ENCODE measurements at regions of chr15 and their contacts with region 1.

Region 1: DNA sequence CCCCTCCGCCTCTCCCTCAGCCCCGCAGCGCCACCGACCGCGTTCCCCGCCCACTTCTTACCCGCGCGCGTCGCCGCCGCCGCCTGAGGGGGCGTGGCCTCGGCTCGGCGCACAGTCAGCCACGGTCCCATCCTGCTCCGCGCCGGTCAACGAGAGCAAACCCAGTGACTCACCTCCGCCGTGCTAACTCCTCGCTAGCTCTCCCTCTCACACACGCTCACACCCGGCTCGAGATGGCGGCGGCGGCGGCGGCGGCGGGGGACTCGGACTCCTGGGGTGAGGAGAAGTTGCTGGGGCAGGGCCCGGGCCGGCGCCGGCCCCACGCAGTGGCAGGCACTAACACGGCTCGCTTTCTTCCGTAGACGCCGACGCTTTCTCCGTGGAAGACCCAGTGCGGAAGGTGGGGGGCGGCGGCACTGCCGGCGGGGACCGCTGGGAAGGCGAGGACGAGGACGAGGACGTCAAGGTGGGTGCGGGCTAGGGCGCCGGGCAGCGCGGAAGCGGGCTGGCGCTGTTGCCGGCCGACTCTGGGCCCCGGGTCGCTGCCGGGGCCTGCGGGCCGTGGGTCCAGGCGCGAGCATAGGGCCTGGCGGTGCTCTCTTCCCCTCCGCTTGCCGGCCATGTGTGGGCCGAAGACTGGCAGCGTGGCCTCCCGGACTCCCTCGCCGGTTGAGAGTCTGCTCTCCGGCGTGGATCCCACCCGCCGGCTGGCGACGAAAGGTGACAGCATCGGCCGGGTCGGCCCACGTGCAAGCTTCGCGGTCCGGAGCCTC is at the start of gene EIF3J:
- DNase-seq: peak; percentile 92 to 96 (median 95)
- ATAC-seq: peak; percentile 95
- H3K4me3 ChIP-seq: peak within 1 kb of the TSS; percentile 96
- H3K4me3 Mint-ChIP-seq: peak within 1 kb of the TSS; percentile 83 to 98 (median 94)
- H3K27ac ChIP-seq: peak within 1 kb of the TSS; percentile 97
- H3K27ac Mint-ChIP-seq: peak within 1 kb of the TSS; percentile 87 to 98 (median 95)
- H3K4me1 ChIP-seq: peaks cover 27 to 29% of the 10 kb centered on the region in 2 donors
- H3K4me1 Mint-ChIP-seq: peaks cover 35 to 60% (median 51%) of the 10 kb centered on the region in 7 donors
- H3K27me3 ChIP-seq: no peaks in the 10 kb centered on the region
- H3K27me3 Mint-ChIP-seq: no peaks in the 10 kb centered on the region
- total RNA-seq, gene EIF3J: 52.9 to 83.4 (median 66.5) TPM

Region 2: DNA sequence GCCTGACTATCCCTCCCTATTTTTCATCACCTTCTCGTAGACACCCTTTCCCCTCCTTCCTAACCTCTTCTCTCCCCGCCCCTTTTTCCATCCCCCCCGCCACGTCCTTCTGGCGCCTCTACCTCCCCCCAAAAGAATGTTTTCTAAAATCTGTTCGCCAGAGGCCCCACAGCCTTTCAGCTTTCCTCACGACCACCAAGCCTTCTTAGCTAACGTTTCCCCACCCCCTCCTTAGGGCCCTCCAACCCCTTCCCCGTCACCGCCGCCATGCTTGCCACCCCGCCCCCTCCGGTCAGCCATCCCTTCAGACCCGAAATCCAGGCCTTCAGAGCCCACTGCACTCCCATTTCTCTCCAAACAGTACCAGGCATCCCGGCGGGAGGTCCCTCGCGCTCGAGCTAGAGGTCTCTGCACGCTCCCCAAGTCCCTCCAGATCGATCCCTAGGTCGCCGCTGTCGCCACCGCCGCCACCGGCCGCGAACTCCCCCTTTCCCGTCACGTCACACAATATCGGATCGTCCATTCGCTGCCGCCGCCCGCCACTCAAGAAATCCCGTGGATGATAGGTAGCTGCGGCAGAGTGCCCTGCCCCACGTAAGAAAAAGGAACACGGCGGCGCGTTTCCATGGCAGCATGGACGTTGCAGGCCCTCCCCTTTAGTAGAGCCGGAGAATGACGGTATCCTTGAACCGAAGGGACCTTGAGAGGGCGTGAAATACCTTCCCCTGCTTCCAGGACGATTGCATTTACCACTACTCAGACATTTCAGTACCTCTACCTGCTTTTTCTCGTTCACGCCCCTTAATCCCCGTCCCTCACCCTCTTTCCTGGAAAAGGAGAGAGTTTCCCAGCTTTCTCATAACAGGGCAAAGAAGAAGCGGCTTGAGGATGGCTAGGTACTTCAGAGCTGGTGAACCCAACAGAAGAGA is 1044.2 kb before region 1 on chr15 and contains the start of gene TP53BP1:
- CTCF ChIA-PET with region 1: no interaction called
- POLR2A ChIA-PET with region 1: no interaction called
- intact Hi-C with region 1: loop called in 1 of 2 experiments (anchors 5 kb)
- DNase-seq: peak; percentile 82 to 97 (median 91)
- ATAC-seq: peak; percentile 99
- H3K4me3 ChIP-seq: peak within 1 kb of the TSS; percentile 89
- H3K4me3 Mint-ChIP-seq: peak within 1 kb of the TSS; percentile 87 to 99 (median 96)
- H3K27ac ChIP-seq: peak within 1 kb of the TSS; percentile 93
- H3K27ac Mint-ChIP-seq: peak within 1 kb of the TSS; percentile 83 to 99 (median 96)
- H3K4me1 ChIP-seq: peaks cover 11 to 13% of the 10 kb centered on the region in 2 donors
- H3K4me1 Mint-ChIP-seq: peaks cover 23 to 44% (median 33%) of the 10 kb centered on the region in 7 donors
- H3K27me3 ChIP-seq: no peaks in the 10 kb centered on the region
- H3K27me3 Mint-ChIP-seq: no peaks in the 10 kb centered on the region
- total RNA-seq, gene TP53BP1: 34.5 to 41.6 (median 40.6) TPM

Region 3: GRCh38 chr15:43824302-43825246 is 712.6 kb before region 1 on chr15 and contains the start of gene MFAP1:
- CTCF ChIA-PET with region 1: no interaction called
- POLR2A ChIA-PET with region 1: no interaction called
- intact Hi-C with region 1: loop called in 1 of 2 experiments (anchors 2 kb)
- DNase-seq: peak; percentile 63 to 94 (median 89)
- ATAC-seq: peak; percentile 94
- H3K4me3 ChIP-seq: peak within 1 kb of the TSS; percentile 100
- H3K4me3 Mint-ChIP-seq: peak within 1 kb of the TSS; percentile 94 to 100 (median 98)
- H3K27ac ChIP-seq: peak within 1 kb of the TSS; percentile 97
- H3K27ac Mint-ChIP-seq: peak within 1 kb of the TSS; percentile 95 to 99 (median 98)
- H3K4me1 ChIP-seq: peaks cover 32 to 34% of the 10 kb centered on the region in 2 donors
- H3K4me1 Mint-ChIP-seq: peaks cover 37 to 81% (median 53%) of the 10 kb centered on the region in 7 donors
- H3K27me3 ChIP-seq: no peaks in the 10 kb centered on the region
- H3K27me3 Mint-ChIP-seq: no peaks in the 10 kb centered on the region
- total RNA-seq, gene MFAP1: 8.5 to 37.3 (median 21.8) TPM

Region 4: GRCh38 chr15:44231842-44232241 is 305.3 kb before region 1 on chr15:
- CTCF ChIA-PET with region 1: no interaction called
- POLR2A ChIA-PET with region 1: no interaction called
- intact Hi-C with region 1: no loop called
- DNase-seq: no peak
- ATAC-seq: no peak
- H3K4me3 ChIP-seq: no peak overlapping the region
- H3K4me3 Mint-ChIP-seq: no peak overlapping the region
- H3K27ac ChIP-seq: no peak overlapping the region
- H3K27ac Mint-ChIP-seq: no peak overlapping the region
- H3K4me1 ChIP-seq: no peaks in the 10 kb centered on the region
- H3K4me1 Mint-ChIP-seq: no peaks in the 10 kb centered on the region
- H3K27me3 ChIP-seq: no peaks in the 10 kb centered on the region
- H3K27me3 Mint-ChIP-seq: peaks cover 0 to 13% (median 0%) of the 10 kb centered on the region in 5 donors

Region 5: DNA sequence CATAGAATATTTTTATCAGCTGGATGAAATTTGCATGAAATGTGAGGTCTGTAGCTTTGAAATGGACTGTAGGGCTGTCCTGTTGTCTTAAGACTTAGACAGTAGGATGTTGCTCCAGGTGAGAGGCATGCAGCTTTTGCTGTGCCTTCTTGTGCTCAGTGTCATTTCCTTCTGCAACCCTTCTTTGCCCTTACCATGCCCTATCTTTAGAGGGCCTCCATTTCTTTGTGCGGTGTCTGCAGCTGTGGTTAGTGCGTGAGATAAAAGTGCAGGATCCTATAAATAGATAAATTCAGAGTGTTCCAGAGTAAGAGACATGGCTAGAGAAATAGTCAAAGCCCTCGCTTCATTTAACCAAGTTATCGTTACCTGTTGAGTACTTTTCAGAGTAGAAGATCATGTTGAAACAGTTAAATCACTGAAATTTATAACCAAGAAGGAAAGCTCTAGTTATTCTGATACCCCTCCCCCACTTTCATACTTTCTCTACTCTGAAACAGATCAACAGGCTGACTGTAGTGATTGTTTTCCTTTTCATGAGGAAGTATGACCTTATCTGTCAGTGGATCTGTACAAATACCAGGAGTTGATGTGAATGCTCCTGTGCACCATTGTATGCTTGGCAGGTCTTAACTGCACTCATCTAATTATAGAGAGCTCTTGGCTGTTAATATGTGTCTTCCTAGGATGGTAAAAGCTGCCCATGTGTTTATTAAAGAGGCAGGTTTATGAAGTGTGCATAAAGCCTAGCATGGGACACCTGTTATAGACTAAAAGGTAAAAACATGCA is 18.0 kb after region 1 on chr15:
- CTCF ChIA-PET with region 1: interaction called, 4 read pairs
- POLR2A ChIA-PET with region 1: interaction called, 19 read pairs
- intact Hi-C with region 1: loop called in 1 of 2 experiments (anchors 2 kb)
- DNase-seq: peak in 6 of 9 donors; percentile 20 to 50 (median 43)
- ATAC-seq: peak; percentile 50
- H3K4me3 ChIP-seq: no peak overlapping the region
- H3K4me3 Mint-ChIP-seq: peak overlapping the region in 9 of 10 donors; percentile 5 to 83 (median 59)
- H3K27ac ChIP-seq: peak overlapping the region; percentile 9
- H3K27ac Mint-ChIP-seq: peak overlapping the region; percentile 14 to 85 (median 82)
- H3K4me1 ChIP-seq: peaks cover 3 to 26% of the 10 kb centered on the region in 2 donors
- H3K4me1 Mint-ChIP-seq: peaks cover 21 to 53% (median 45%) of the 10 kb centered on the region in 7 donors
- H3K27me3 ChIP-seq: no peaks in the 10 kb centered on the region
- H3K27me3 Mint-ChIP-seq: no peaks in the 10 kb centered on the region

Region 6: GRCh38 chr15:44728576-44729407 is 191.6 kb after region 1 on chr15:
- CTCF ChIA-PET with region 1: no interaction called
- POLR2A ChIA-PET with region 1: interaction called, 3 read pairs
- intact Hi-C with region 1: loop called in 1 of 2 experiments (anchors 5 kb)
- DNase-seq: peak; percentile 75 to 97 (median 96)
- ATAC-seq: peak; percentile 88
- H3K4me3 ChIP-seq: peak overlapping the region; percentile 94
- H3K4me3 Mint-ChIP-seq: peak overlapping the region; percentile 87 to 100 (median 99)
- H3K27ac ChIP-seq: peak overlapping the region; percentile 99
- H3K27ac Mint-ChIP-seq: peak overlapping the region; percentile 98 to 100 (median 100)
- H3K4me1 ChIP-seq: peaks cover 52 to 56% of the 10 kb centered on the region in 2 donors
- H3K4me1 Mint-ChIP-seq: peaks cover 54 to 86% (median 77%) of the 10 kb centered on the region in 7 donors
- H3K27me3 ChIP-seq: no peaks in the 10 kb centered on the region
- H3K27me3 Mint-ChIP-seq: peaks cover 0 to 2% (median 0%) of the 10 kb centered on the region in 5 donors

Measured in naive thymus-derived CD4-positive, alpha-beta T cell (primary cell).